PC-9 (cell line): ENCODE measurements at regions of chr1 and their contacts with region 1.

Region 1: DNA sequence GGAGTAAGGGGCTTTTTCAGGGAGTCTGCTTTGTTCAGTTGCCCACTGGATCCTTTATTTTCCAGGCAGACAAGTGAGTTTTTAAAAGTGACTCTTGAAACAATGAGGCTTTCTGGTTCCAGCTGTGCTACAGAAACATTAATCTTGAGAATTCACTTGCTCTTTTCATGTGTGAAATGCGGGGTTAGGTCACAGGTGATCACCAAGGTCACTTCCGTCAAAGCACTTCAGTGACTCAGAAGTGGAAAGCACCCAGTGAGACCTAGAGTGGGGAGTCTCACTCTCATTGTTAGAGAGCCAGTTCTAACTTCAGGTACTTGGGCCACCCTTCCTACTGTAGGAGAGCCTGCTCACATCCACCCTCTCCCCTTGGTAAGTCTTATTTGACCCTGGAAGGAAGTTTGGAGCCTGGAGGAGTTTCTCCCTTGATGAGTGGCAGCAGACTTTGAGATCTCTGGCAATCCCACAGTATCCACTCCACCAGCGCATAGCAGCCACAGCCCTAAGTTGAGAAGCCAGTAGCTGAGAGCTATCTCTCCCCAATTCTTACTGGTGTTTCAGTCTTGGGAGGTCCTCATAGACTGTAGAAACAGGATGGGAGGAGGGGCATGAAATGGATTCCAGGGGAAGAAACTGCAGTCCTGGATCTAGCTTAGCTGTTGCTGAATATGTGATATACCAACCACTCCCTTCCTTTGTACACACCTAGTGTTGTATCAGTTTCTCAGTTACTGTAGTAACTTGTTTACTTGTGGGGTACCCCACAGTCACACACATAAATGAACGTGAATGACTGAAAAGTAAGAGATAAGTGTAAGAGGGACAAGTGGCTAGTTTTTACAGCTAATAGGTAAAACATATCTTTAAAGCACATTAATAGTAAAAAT is 3.1 kb downstream of the TACSTD2 start:
- DNase-seq: peak; percentile 62 to 88
- H3K4me3 ChIP-seq: peak overlapping the region; percentile 97
- H3K27ac ChIP-seq: peak overlapping the region; percentile 99
- H3K4me1 ChIP-seq: peaks cover 61% of the 10 kb centered on the region
- H3K27me3 ChIP-seq: no peaks in the 10 kb centered on the region
- CTCF ChIP-seq: no peak

Region 2: GRCh38 chr1:56894014-56894413 is 1679.9 kb before region 1 on chr1:
- CTCF ChIA-PET with region 1: no interaction called
- POLR2A ChIA-PET with region 1: interaction called, 13 read pairs
- intact Hi-C with region 1: no loop called
- DNase-seq: no peak
- H3K4me3 ChIP-seq: no peak overlapping the region
- H3K27ac ChIP-seq: no peak overlapping the region
- H3K4me1 ChIP-seq: no peaks in the 10 kb centered on the region
- H3K27me3 ChIP-seq: peaks cover 25% of the 10 kb centered on the region
- CTCF ChIP-seq: no peak

Region 3: DNA sequence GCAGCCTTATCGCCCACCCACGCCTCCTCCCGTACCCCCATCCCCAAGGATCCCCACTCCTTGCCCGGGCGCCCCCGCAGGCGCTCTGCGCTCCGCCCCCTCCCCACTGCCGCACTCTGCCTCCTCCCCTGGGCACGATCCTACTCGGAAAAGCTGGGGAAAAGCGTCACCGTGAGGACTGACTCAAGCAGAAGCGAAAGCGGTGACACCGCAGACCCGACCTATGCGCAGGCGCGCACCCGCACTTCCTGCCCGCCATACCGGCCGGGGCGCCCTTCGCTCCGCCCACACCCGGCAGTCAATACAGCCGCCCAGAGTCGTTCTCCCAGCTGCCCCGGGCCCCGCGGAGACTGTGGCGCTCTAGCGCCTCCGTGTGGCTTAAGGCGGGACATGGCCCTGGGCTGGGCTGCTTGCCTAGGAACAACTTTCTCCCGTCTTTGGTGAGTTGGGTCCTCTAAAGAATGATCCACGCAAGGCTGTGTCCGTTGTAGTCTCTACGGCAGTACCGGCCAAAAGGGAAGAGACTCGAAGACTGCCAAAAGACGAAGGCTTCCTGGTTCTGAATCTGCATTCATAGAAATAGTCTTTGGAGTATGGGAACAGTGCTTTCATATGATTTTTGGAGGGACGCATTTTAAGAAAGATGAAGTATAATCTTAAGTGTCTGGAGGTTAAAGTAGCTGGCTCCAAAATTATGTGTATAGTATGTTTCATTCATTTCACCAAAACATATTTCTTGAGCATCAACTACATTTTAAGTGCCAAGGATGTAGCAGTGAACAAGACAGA is 27.2 kb before region 1 on chr1 and contains the start of gene OMA1:
- CTCF ChIA-PET with region 1: no interaction called
- POLR2A ChIA-PET with region 1: interaction called, 4 read pairs
- intact Hi-C with region 1: loop called (anchors 1 kb)
- DNase-seq: peak; percentile 85 to 98
- H3K4me3 ChIP-seq: peak within 1 kb of the TSS; percentile 85
- H3K27ac ChIP-seq: peak within 1 kb of the TSS; percentile 79
- H3K4me1 ChIP-seq: peaks cover 11% of the 10 kb centered on the region
- H3K27me3 ChIP-seq: no peaks in the 10 kb centered on the region
- CTCF ChIP-seq: peak; percentile 90
- total RNA-seq, gene OMA1: 27.9 and 29.0 TPM in 2 replicates

Region 4: DNA sequence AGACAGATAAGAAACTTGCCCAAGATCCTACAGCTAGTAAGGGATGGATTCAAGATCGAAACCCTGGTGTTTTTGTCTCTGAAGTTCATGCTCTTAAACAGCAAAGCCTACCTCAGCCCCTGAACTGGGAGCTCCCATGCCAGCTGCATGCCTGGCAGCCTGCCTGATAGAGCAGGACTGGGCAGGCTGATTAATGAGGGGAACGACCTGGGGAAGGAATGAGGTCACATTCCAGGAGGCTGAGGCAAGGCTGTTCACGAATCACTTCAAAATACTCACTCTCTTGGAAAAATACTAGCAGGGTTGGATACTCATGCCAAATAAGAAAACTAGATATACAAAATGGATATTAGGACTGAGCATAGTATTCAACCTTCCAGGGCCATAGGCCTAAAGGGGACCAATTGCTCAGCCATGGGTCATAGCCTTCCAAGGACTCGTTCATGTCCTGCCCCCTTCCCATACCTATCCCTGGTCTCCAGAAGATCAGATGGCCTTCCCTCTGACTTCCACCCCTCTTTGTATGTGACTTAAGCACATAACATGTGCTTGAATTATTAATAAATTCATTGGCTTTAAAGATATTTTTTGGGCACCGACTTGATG is 18.7 kb after region 1 on chr1:
- CTCF ChIA-PET with region 1: no interaction called
- POLR2A ChIA-PET with region 1: interaction called, 5 read pairs
- intact Hi-C with region 1: loop called (anchors 1 kb)
- DNase-seq: peak; percentile 87 to 94
- H3K4me3 ChIP-seq: no peak overlapping the region
- H3K27ac ChIP-seq: peak overlapping the region; percentile 81
- H3K4me1 ChIP-seq: peaks cover 31% of the 10 kb centered on the region
- H3K27me3 ChIP-seq: no peaks in the 10 kb centered on the region
- CTCF ChIP-seq: no peak

Region 5: DNA sequence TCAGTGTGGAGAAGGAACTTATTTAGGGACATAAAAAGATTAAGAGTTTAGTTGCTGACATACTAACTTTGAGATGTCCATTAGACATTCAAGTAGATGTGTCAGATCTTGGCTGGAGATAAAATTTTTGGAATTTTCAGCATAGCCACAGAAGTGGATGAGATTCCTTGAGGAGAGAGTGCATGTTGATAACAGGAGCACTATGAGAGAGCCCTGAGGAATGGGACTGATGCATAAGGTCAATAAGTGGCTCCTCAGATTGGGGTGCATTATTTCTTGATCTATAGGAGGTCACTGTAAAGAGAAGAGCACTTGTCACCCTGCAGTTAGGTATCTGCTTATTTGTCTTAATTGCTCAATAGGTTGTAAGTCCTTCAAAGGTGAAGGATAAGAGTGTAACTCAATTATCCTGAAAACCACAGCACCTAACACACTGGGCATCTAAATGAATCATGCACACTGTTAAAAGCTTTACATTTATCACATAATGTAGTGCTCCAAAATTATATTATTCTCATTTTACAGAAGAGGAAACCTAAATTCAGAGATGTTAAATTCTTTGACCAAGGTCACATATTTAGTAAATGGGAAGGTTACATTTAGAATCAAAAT is 55.1 kb after region 1 on chr1:
- CTCF ChIA-PET with region 1: no interaction called
- POLR2A ChIA-PET with region 1: interaction called, 12 read pairs
- intact Hi-C with region 1: loop called (anchors 2 kb)
- DNase-seq: peak in 1 of 2 experiments; percentile 89
- H3K4me3 ChIP-seq: no peak overlapping the region
- H3K27ac ChIP-seq: peak overlapping the region; percentile 49
- H3K4me1 ChIP-seq: peaks cover 19% of the 10 kb centered on the region
- H3K27me3 ChIP-seq: no peaks in the 10 kb centered on the region
- CTCF ChIP-seq: no peak